Activated CD4-positive, alpha-beta T cell treated with anti-CD3 and anti-CD28 coated beads, Interleukin-2, amount 10 ng/mL, durations not matched to agents 7 days and 5 days (primary cell): ENCODE measurements at regions of chr15 and their contacts with region 1.

Region 1: GRCh38 chr15:50256188-50257041 is 9.1 kb downstream of the HDC start:
- DNase-seq: no peak
- H3K4me3 Mint-ChIP-seq: no peak overlapping the region
- H3K27ac Mint-ChIP-seq: no peak overlapping the region
- H3K4me1 Mint-ChIP-seq: peaks cover 33% of the 10 kb centered on the region
- H3K27me3 Mint-ChIP-seq: no peaks in the 10 kb centered on the region

Region 2: GRCh38 chr15:49101536-49101935 is 1154.9 kb before region 1 on chr15:
- CTCF ChIA-PET with region 1: no interaction called
- POLR2A ChIA-PET with region 1: interaction called, 11 read pairs
- DNase-seq: no peak
- H3K4me3 Mint-ChIP-seq: no peak overlapping the region
- H3K27ac Mint-ChIP-seq: no peak overlapping the region
- H3K4me1 Mint-ChIP-seq: no peaks in the 10 kb centered on the region
- H3K27me3 Mint-ChIP-seq: no peaks in the 10 kb centered on the region

Region 3: DNA sequence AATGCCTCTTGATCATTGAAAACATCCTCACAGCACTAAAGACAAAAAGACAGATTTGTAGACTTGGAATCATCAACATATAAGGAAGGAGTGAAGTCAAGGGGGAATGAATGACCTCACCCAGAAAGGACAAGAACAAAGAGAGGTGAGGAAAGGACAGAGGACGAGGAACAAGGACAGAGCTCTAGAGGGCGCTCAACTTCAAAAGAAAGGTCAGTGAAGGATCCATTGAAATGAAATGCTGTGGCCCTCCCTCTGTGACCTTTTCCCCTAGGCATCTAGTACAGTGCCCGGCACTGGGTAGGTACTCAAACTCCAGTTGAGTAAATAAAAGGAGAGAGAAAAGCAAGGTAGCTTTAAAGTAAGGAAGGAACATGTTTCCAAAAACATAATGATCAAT is 139.9 kb before region 1 on chr15:
- CTCF ChIA-PET with region 1: no interaction called
- POLR2A ChIA-PET with region 1: no interaction called
- DNase-seq: no peak
- H3K4me3 Mint-ChIP-seq: no peak overlapping the region
- H3K27ac Mint-ChIP-seq: no peak overlapping the region
- H3K4me1 Mint-ChIP-seq: peaks cover 50% of the 10 kb centered on the region
- H3K27me3 Mint-ChIP-seq: no peaks in the 10 kb centered on the region

Region 4: DNA sequence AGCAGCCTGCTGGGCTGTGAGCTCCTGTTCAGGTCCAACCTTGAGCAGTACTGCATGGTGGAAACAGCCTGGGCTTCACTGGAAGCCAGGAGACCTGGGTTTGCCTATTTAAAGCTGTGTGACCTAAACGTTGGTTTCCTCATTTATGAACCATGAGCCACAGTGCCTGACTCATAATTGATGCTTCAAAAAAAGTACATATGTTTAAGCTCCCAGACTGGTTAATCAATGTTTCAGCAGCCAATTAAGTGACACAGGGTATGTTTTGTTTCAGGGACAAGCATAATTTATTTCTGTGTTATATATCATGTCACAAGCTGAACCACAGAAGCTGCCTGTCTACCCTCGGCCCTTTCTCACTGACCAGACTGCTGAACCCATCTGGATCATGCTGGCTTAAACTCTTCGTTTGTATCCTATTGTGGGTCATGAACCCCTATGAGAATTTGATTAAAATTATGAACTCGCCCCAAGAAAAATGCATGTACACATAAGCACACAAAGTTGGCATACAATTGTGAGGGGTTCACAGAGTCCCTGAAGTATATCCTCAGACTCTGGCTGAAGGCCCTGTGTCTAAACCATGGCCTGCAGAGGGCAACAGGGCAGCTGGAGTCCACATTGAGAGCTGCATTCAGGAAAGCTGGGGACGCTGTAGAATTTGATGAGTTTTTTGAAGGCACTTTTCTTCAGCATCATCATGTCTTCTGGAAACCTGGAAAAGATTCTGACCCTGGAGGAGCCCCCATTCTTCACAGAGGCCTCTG is 14.5 kb before region 1 on chr15:
- CTCF ChIA-PET with region 1: interaction called, 88 read pairs
- POLR2A ChIA-PET with region 1: no interaction called
- DNase-seq: no peak
- H3K4me3 Mint-ChIP-seq: no peak overlapping the region
- H3K27ac Mint-ChIP-seq: no peak overlapping the region
- H3K4me1 Mint-ChIP-seq: peaks cover 12% of the 10 kb centered on the region
- H3K27me3 Mint-ChIP-seq: no peaks in the 10 kb centered on the region

Region 5: GRCh38 chr15:50431204-50431603 is 174.8 kb after region 1 on chr15:
- CTCF ChIA-PET with region 1: no interaction called
- POLR2A ChIA-PET with region 1: no interaction called
- DNase-seq: no peak
- H3K4me3 Mint-ChIP-seq: no peak overlapping the region
- H3K27ac Mint-ChIP-seq: no peak overlapping the region
- H3K4me1 Mint-ChIP-seq: peaks cover 40% of the 10 kb centered on the region
- H3K27me3 Mint-ChIP-seq: no peaks in the 10 kb centered on the region

Region 6: DNA sequence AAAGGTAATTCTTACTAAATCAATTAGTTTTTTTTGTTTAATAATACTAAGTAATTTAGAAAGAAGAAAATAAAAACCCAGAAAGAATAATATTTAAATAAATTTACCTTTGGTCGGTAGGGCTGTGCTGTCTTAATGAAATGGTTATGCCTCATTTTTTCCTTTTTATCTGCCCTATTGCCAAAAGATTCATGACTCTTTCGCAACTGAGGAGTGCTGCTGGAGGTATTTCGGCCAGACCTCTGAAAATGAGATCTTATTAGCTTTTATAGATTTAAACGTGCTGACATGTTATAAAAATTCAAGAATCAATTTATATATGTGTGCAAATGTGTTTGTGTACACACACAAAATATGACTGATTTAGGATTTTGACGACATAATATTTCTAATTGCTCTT is 357.2 kb after region 1 on chr15:
- CTCF ChIA-PET with region 1: no interaction called
- POLR2A ChIA-PET with region 1: no interaction called
- DNase-seq: no peak
- H3K4me3 Mint-ChIP-seq: no peak overlapping the region
- H3K27ac Mint-ChIP-seq: no peak overlapping the region
- H3K4me1 Mint-ChIP-seq: no peaks in the 10 kb centered on the region
- H3K27me3 Mint-ChIP-seq: no peaks in the 10 kb centered on the region